Breast epithelium (tissue), 4 donors: ENCODE measurements at regions of chr1 and their contacts with region 1.

Region 1: GRCh38 chr1:56967900-56968832 is 2.4 kb upstream of the C8B start:
- DNase-seq: no peak
- H3K4me3 ChIP-seq: no peak overlapping the region
- H3K27ac ChIP-seq: no peak overlapping the region
- H3K4me1 ChIP-seq: no peaks in the 10 kb centered on the region
- H3K27me3 ChIP-seq: no peaks in the 10 kb centered on the region
- CTCF ChIP-seq: no peak
- POLR2A ChIP-seq: no peak

Region 2: GRCh38 chr1:56908619-56909221 is 59.4 kb before region 1 on chr1:
- intact Hi-C with region 1: loop called (anchors 2 kb)
- DNase-seq: no peak
- H3K4me3 ChIP-seq: no peak overlapping the region
- H3K27ac ChIP-seq: no peak overlapping the region
- H3K4me1 ChIP-seq: no peaks in the 10 kb centered on the region
- H3K27me3 ChIP-seq: no peaks in the 10 kb centered on the region
- CTCF ChIP-seq: no peak
- POLR2A ChIP-seq: no peak

Region 3: DNA sequence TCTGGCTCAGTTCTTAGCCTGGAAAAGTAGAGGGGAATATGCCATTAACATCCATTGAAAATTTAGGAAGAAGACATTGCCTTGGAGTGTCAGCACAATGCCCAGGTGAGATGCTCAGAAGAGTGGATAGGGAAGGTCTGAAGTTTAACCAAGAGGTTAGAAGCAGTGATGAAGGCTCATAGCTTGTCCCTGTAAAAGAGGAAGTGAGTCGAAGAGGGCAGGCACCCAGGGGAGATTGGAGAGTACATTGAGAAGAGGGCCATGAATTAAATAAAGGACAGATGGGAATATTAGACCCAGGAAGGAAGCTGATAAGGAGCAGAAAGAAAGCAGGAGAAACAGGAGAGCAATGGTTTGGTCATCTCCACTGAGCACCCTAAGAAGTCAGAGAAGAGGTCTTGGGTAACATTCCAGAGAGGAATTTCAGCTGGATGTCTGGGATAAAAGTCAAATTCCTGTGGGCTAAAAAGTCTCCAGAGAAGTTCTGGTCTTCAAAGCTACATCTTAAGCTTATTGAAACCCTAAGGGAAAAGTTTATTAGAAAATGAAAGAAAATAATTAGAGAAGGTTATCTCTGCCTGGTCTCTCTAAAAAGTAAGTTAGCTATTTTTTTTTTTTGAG is 19.7 kb before region 1 on chr1:
- intact Hi-C with region 1: no loop called
- DNase-seq: no peak
- H3K4me3 ChIP-seq: no peak overlapping the region
- H3K27ac ChIP-seq: no peak overlapping the region
- H3K4me1 ChIP-seq: no peaks in the 10 kb centered on the region
- H3K27me3 ChIP-seq: no peaks in the 10 kb centered on the region
- CTCF ChIP-seq: no peak
- POLR2A ChIP-seq: no peak

Region 4: GRCh38 chr1:57704231-57704630 is 736.1 kb after region 1 on chr1:
- intact Hi-C with region 1: no loop called
- DNase-seq: no peak
- H3K4me3 ChIP-seq: no peak overlapping the region
- H3K27ac ChIP-seq: no peak overlapping the region
- H3K4me1 ChIP-seq: no peaks in the 10 kb centered on the region
- H3K27me3 ChIP-seq: no peaks in the 10 kb centered on the region
- CTCF ChIP-seq: no peak
- POLR2A ChIP-seq: no peak